Caco-2 (cell line): ENCODE measurements at regions of chr2 and their contacts with region 1.

Region 1: DNA sequence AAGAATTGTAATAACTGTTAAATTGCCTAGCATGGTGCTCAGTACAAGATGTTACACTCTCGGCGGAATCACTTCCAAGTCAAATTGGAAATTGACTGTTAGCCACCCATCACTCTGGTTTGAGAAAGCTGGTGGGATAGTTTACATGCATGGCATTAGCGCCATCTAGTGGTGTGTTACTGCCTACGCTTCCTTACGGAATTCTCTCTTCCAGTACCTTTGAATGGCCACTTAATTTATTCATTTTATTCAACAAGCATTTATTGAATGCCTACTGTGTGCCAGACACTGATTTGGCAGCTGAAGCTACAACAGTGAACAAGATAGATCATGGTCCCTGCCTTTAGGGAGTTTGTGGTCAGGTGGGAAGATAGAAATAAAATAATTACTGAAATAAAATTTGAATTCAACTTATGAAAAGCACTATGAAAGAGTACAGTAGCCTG is 171.2 kb downstream of the TMEM247 start:
- DNase-seq: peak; percentile 74 to 79
- H3K4me3 ChIP-seq: no peak overlapping the region
- H3K4me3 Mint-ChIP-seq: no peak overlapping the region
- H3K27ac Mint-ChIP-seq: no peak overlapping the region
- H3K4me1 ChIP-seq: no peaks in the 10 kb centered on the region
- H3K4me1 Mint-ChIP-seq: no peaks in the 10 kb centered on the region
- H3K27me3 ChIP-seq: no peaks in the 10 kb centered on the region
- H3K27me3 Mint-ChIP-seq: no peaks in the 10 kb centered on the region
- CTCF ChIP-seq: peak; percentile 88 to 90

Region 2: GRCh38 chr2:45993476-45993991 is 657.0 kb before region 1 on chr2:
- CTCF ChIA-PET with region 1: no interaction called
- POLR2A ChIA-PET with region 1: no interaction called
- intact Hi-C with region 1: loop called (anchors 10 kb)
- DNase-seq: peak; percentile 71 to 82
- H3K4me3 ChIP-seq: no peak overlapping the region
- H3K4me3 Mint-ChIP-seq: no peak overlapping the region
- H3K27ac Mint-ChIP-seq: no peak overlapping the region
- H3K4me1 ChIP-seq: no peaks in the 10 kb centered on the region; the same call in 1 of the 2 replicates
- H3K4me1 Mint-ChIP-seq: peaks cover 12% of the 10 kb centered on the region
- H3K27me3 ChIP-seq: no peaks in the 10 kb centered on the region
- H3K27me3 Mint-ChIP-seq: no peaks in the 10 kb centered on the region
- CTCF ChIP-seq: peak; percentile 80 to 83

Region 3: GRCh38 chr2:46364797-46365457 is 285.7 kb before region 1 on chr2:
- CTCF ChIA-PET with region 1: no interaction called
- POLR2A ChIA-PET with region 1: no interaction called
- intact Hi-C with region 1: no loop called
- DNase-seq: peak in 1 of 2 experiments; percentile 68
- H3K4me3 ChIP-seq: no peak overlapping the region
- H3K4me3 Mint-ChIP-seq: no peak overlapping the region
- H3K27ac Mint-ChIP-seq: no peak overlapping the region
- H3K4me1 ChIP-seq: no peaks in the 10 kb centered on the region
- H3K4me1 Mint-ChIP-seq: no peaks in the 10 kb centered on the region
- H3K27me3 ChIP-seq: no peaks in the 10 kb centered on the region
- H3K27me3 Mint-ChIP-seq: no peaks in the 10 kb centered on the region
- CTCF ChIP-seq: peak; percentile 67 to 75

Region 4: GRCh38 chr2:46385786-46386577 is 264.6 kb before region 1 on chr2:
- CTCF ChIA-PET with region 1: no interaction called
- POLR2A ChIA-PET with region 1: no interaction called
- intact Hi-C with region 1: no loop called
- DNase-seq: no peak
- H3K4me3 ChIP-seq: no peak overlapping the region
- H3K4me3 Mint-ChIP-seq: no peak overlapping the region
- H3K27ac Mint-ChIP-seq: no peak overlapping the region
- H3K4me1 ChIP-seq: no peaks in the 10 kb centered on the region
- H3K4me1 Mint-ChIP-seq: peaks cover 7% of the 10 kb centered on the region
- H3K27me3 ChIP-seq: no peaks in the 10 kb centered on the region
- H3K27me3 Mint-ChIP-seq: no peaks in the 10 kb centered on the region
- CTCF ChIP-seq: no peak

Region 5: GRCh38 chr2:46487667-46488333 is 162.8 kb before region 1 on chr2:
- CTCF ChIA-PET with region 1: no interaction called
- POLR2A ChIA-PET with region 1: no interaction called
- intact Hi-C with region 1: loop called (anchors 5 kb)
- DNase-seq: no peak
- H3K4me3 ChIP-seq: no peak overlapping the region
- H3K4me3 Mint-ChIP-seq: no peak overlapping the region
- H3K27ac Mint-ChIP-seq: no peak overlapping the region
- H3K4me1 ChIP-seq: no peaks in the 10 kb centered on the region
- H3K4me1 Mint-ChIP-seq: no peaks in the 10 kb centered on the region
- H3K27me3 ChIP-seq: no peaks in the 10 kb centered on the region
- H3K27me3 Mint-ChIP-seq: no peaks in the 10 kb centered on the region
- CTCF ChIP-seq: no peak

Region 6: DNA sequence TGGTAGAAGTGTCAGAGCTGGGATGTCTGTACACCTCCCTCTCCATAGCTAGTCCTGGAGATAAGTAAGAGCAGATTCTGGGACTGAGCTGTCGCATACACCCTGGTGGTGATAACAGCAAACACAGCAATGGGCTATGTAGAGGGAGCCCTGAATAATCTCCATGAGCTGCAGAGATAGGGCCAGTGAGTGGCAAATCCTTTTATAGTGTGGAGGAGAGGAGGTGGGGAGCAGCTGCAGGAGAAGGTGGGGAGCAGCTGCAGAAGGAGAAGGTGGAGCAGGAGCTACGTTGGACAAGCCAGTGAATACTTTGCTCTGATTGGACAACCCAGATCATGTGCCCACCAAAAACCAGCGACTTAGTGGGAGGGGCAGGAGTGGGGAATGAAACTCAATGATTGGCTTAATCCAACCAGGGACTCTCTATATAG is 85.8 kb before region 1 on chr2:
- CTCF ChIA-PET with region 1: no interaction called
- POLR2A ChIA-PET with region 1: no interaction called
- intact Hi-C with region 1: loop called (anchors 5 kb)
- DNase-seq: no peak
- H3K4me3 ChIP-seq: no peak overlapping the region
- H3K4me3 Mint-ChIP-seq: no peak overlapping the region
- H3K27ac Mint-ChIP-seq: no peak overlapping the region
- H3K4me1 ChIP-seq: no peaks in the 10 kb centered on the region
- H3K4me1 Mint-ChIP-seq: no peaks in the 10 kb centered on the region
- H3K27me3 ChIP-seq: no peaks in the 10 kb centered on the region
- H3K27me3 Mint-ChIP-seq: no peaks in the 10 kb centered on the region
- CTCF ChIP-seq: no peak

Region 7: GRCh38 chr2:46632349-46632748 is 18.2 kb before region 1 on chr2:
- CTCF ChIA-PET with region 1: interaction called, 4 read pairs
- POLR2A ChIA-PET with region 1: no interaction called
- intact Hi-C with region 1: loop called (anchors 1 kb)
- DNase-seq: peak in 1 of 2 experiments; percentile 39
- H3K4me3 ChIP-seq: no peak overlapping the region
- H3K4me3 Mint-ChIP-seq: no peak overlapping the region
- H3K27ac Mint-ChIP-seq: no peak overlapping the region
- H3K4me1 ChIP-seq: no peaks in the 10 kb centered on the region
- H3K4me1 Mint-ChIP-seq: no peaks in the 10 kb centered on the region
- H3K27me3 ChIP-seq: no peaks in the 10 kb centered on the region
- H3K27me3 Mint-ChIP-seq: no peaks in the 10 kb centered on the region
- CTCF ChIP-seq: peak; percentile 35 to 41

Region 8: DNA sequence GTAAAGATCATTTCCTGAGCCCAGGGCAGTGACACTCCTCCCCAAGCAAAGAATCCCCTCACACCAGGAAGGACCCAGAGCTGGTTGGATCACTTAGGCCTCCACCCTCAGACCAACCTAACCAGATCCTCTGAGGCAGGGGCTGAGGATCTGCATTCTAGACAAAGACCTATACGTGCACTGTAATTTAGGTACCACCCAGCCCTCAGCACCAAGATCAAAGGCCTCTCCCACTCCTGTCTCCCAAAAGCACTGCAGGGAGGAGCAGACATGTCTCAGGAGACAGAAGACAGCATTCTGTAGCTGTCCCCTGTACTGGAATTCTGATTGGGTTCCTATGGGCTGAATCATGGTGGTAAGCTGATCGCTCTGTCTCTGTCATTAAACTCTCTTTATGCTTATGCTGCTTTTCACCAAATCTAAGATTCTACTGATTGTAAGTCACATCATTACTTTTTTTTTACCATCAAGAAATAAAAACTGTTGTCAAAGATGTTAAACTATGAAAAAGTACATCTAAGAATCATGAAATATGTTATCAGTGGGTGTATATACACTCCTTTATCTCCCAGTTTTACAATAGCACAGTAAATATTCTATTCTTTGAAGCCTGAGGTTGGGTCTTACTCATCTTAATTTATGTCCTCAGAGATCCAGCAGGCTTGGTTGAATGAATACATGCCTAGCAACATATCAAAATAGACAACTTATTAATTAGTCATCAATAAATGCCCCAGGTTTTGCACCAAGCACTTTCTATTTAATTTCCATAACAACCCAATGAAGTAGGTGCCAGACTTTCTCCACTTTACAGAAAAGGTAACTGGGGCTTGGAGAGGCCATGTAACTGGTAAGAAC is 236.7 kb after region 1 on chr2:
- CTCF ChIA-PET with region 1: interaction called, 3 read pairs
- POLR2A ChIA-PET with region 1: no interaction called
- intact Hi-C with region 1: loop called (anchors 1 kb)
- DNase-seq: peak; percentile 26 to 51
- H3K4me3 ChIP-seq: no peak overlapping the region
- H3K4me3 Mint-ChIP-seq: no peak overlapping the region
- H3K27ac Mint-ChIP-seq: peak overlapping the region; percentile 59
- H3K4me1 ChIP-seq: peaks cover 20% of the 10 kb centered on the region
- H3K4me1 Mint-ChIP-seq: peaks cover 19% of the 10 kb centered on the region
- H3K27me3 ChIP-seq: no peaks in the 10 kb centered on the region
- H3K27me3 Mint-ChIP-seq: no peaks in the 10 kb centered on the region
- CTCF ChIP-seq: no peak